ENCODE measurements at regions of chr18 and their contacts with region 1.

Region 1: GRCh38 chr18:24075731-24076130 is 61.2 kb downstream of the TTC39C start:
- DNase-seq: no peak
- H3K4me3 ChIP-seq: no peak overlapping the region
- H3K4me3 Mint-ChIP-seq: peak overlapping the region in 5 of 8 donors; percentile 48 to 70 (median 64)
- H3K27ac ChIP-seq: no peak overlapping the region
- H3K27ac Mint-ChIP-seq: peak overlapping the region; percentile 79 to 97 (median 87)
- H3K4me1 ChIP-seq: peaks cover 22% of the 10 kb centered on the region
- H3K4me1 Mint-ChIP-seq: peaks cover 38 to 78% (median 57%) of the 10 kb centered on the region in 4 donors
- H3K27me3 ChIP-seq: no peaks in the 10 kb centered on the region
- H3K27me3 Mint-ChIP-seq: no peaks in the 10 kb centered on the region

Region 2: DNA sequence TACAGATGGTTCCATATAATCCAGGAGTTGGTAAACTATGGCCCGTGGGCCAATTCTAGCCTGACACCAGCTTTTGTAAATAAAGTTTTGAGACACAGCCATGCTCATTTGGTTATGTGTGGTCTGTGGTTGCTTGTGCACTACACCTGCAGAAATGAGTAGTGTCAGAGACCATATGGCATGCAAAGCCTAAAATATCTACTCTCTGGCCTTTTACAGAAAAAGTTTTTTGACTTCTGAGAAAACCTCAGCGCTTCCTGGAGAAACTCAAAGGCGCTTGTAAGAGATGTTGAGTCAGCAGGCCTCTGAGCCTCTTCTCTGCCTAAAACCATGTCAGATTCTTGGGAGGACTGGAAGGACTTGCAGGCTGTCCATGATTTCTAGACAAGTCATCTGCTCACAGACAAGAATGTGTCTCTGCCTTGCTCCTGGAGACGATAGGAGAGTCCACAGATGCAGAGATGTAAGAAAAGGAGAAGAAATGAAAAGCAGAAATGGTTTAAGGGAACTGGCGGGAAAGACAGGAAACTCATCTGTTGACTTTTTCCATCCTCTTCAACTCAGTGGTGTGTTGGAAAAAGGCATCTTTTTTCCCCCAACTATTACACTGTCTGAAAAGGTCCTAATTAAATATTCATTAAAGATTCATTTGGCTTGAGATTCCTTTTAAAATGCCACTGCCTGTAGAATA is 55.9 kb before region 1 on chr18:
- CTCF ChIA-PET with region 1: interaction called, 4 read pairs
- POLR2A ChIA-PET with region 1: interaction called, 7 read pairs
- intact Hi-C with region 1: loop called (anchors 1 kb)
- DNase-seq: peak; percentile 73 to 82 (median 79)
- H3K4me3 ChIP-seq: peak overlapping the region in 1 of 2 donors; percentile 50
- H3K4me3 Mint-ChIP-seq: peak overlapping the region; percentile 78 to 100 (median 96)
- H3K27ac ChIP-seq: peak overlapping the region; percentile 75
- H3K27ac Mint-ChIP-seq: peak overlapping the region; percentile 85 to 99 (median 95)
- H3K4me1 ChIP-seq: peaks cover 83% of the 10 kb centered on the region
- H3K4me1 Mint-ChIP-seq: peaks cover 68 to 96% (median 79%) of the 10 kb centered on the region in 4 donors
- H3K27me3 ChIP-seq: no peaks in the 10 kb centered on the region
- H3K27me3 Mint-ChIP-seq: no peaks in the 10 kb centered on the region

Measured in CD4-positive, alpha-beta memory T cell (primary cell).